ENCODE measurements at regions of chr9 and their contacts with region 1.

Region 1: DNA sequence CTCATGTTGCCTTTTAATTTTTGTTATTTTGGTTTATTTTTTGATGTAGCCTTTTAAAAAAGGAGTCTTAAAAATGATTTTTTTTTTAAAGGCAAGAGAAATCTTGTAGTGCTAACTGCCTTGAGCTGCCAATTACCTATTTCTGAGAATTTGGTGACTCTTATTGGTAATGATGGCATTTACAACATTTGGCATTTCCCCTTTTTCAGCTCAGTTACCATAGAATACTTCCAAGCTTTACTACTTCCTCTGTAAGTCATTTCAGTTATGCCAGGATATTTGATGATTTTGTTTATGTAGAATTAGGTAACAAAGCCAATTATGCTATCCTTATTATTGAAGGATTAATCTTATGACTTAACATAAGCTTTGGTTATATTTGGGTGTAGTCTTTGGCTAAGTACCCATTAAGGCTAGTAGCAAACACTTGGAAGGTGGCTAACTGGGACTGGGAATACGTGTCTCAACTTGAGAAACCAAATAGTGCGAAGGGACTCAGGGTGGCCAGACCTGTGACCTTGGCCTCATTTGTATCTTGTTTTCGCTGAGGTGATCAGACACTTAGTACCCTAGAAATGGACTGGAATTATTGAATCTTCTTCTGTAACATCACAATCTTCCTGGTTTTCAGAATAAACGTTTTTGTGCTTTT is 27.7 kb downstream of the CDC37L1 start:
- DNase-seq: no peak
- ATAC-seq: no peak
- H3K4me3 Mint-ChIP-seq: no peak overlapping the region
- H3K27ac Mint-ChIP-seq: peak overlapping the region; percentile 12
- H3K4me1 Mint-ChIP-seq: no peaks in the 10 kb centered on the region
- H3K27me3 Mint-ChIP-seq: no peaks in the 10 kb centered on the region
- CTCF ChIP-seq: no peak

Region 2: DNA sequence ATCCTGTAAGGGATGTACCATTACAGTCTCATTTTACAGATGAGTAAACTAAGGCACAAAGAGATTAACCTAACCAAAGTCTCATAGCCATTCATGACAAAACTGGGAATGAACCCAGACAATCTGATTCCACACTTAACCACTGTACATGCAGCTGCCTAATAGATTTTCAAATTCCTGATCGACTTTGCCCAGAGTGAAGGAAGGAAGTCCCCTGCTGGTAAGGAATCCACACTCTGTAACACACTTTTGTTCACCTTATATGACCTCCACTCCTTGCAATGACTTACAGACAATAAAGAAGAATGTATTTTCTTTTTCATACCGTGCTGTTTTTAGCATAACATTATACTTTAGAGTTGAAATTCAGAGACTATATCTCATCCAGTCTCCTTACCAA is 76.3 kb before region 1 on chr9:
- CTCF ChIA-PET with region 1: no interaction called
- POLR2A ChIA-PET with region 1: no interaction called
- intact Hi-C with region 1: no loop called
- DNase-seq: no peak
- ATAC-seq: no peak
- H3K4me3 Mint-ChIP-seq: no peak overlapping the region
- H3K27ac Mint-ChIP-seq: no peak overlapping the region
- H3K4me1 Mint-ChIP-seq: no peaks in the 10 kb centered on the region
- H3K27me3 Mint-ChIP-seq: peaks cover 7% of the 10 kb centered on the region
- CTCF ChIP-seq: no peak

Region 3: DNA sequence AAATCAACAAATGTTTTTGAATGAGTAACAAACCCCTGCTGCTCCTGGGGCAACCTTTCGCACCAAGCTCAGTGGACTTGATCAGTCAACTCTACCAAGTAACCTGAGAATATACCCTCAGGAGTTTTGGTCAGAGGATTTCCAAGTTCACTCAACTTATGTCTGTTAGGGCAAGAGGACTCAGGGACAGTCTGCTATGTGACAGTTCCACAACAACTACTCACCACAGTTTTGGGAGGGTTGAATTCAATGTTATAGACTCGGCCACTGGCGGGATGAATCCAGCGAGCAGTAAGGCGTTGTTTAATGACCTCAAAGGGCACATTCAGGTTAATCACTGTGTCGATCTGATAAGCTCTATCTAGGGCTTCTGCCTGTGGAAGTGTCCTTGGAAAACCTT is 11.8 kb after region 1 on chr9:
- CTCF ChIA-PET with region 1: no interaction called
- POLR2A ChIA-PET with region 1: interaction called, 10 read pairs
- intact Hi-C with region 1: no loop called
- DNase-seq: no peak
- ATAC-seq: no peak
- H3K4me3 Mint-ChIP-seq: no peak overlapping the region
- H3K27ac Mint-ChIP-seq: no peak overlapping the region
- H3K4me1 Mint-ChIP-seq: peaks cover 4% of the 10 kb centered on the region
- H3K27me3 Mint-ChIP-seq: no peaks in the 10 kb centered on the region
- CTCF ChIP-seq: no peak